Activated T-helper 2 cell treated with anti-CD3 and anti-CD28 coated beads, Interferon-gamma antibody, Interleukin-2, Interleukin-4, amounts not matched to agents 10 μg/mL and 5 μg/mL and 100 μg/mL, durations not matched to agents 14 hours and 24 hours and 36 hours (primary cell): ENCODE measurements at regions of chr9 and their contacts with region 1.

Region 1: GRCh38 chr9:19517202-19517942 is 108.6 kb downstream of the ACER2 start:
- DNase-seq: no peak
- H3K4me3 Mint-ChIP-seq: no peak overlapping the region
- H3K27ac Mint-ChIP-seq: no peak overlapping the region
- H3K4me1 Mint-ChIP-seq: peaks cover 44% of the 10 kb centered on the region
- H3K27me3 Mint-ChIP-seq: peaks cover 1% of the 10 kb centered on the region

Region 2: DNA sequence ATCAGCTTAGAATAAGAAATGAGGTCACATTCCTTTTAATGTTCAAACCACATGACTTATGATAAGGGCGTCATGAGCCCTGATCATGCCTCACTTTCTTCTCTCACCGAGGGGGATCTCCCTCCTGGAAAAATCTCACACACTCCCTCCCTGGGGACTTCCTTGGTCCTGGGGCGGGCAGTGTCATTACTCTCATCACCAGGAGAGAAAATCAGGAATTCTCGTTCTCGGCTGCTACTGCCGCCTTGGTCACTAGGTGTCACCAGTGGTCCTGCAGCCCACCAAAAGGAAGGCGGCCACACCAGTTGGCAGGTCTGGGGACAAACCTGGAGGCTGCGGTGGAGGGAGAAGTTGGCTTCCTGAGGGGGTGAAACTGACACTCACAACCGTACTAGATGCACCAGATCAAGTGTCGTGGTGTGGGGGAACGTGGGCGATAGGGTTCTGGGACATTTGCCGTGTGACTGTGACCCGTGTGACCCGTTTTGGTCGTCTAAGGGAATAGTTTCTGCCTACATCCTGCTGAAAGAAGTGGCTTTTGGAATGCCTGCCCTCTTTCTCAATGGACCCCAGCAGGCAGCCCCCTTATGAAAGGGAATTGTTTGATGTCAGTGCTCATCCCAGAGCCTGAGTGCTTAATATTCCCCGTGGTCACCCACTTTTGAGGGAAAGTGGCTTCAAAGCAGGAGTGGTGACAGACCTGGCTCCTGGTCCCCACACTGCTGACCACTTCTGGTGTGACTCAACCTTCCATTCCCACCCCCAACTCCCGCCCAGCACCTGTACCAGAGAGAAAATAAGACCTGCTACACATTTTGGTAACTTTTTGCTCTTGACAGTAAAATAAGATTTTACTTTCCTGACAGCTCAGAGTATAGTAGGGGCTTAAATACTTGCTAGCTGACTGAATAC is 45.4 kb before region 1 on chr9:
- intact Hi-C with region 1: loop called (anchors 1 kb)
- DNase-seq: no peak
- H3K4me3 Mint-ChIP-seq: peak overlapping the region; percentile 17
- H3K27ac Mint-ChIP-seq: no peak overlapping the region
- H3K4me1 Mint-ChIP-seq: peaks cover 13% of the 10 kb centered on the region
- H3K27me3 Mint-ChIP-seq: peaks cover 11% of the 10 kb centered on the region

Region 3: GRCh38 chr9:19493174-19493811 is 24.1 kb before region 1 on chr9:
- intact Hi-C with region 1: loop called (anchors 2 kb)
- DNase-seq: peak; percentile 19
- H3K4me3 Mint-ChIP-seq: no peak overlapping the region
- H3K27ac Mint-ChIP-seq: no peak overlapping the region
- H3K4me1 Mint-ChIP-seq: peaks cover 15% of the 10 kb centered on the region
- H3K27me3 Mint-ChIP-seq: peaks cover 5% of the 10 kb centered on the region

Region 4: GRCh38 chr9:19665146-19665863 is 147.9 kb after region 1 on chr9:
- intact Hi-C with region 1: loop called (anchors 5 kb)
- DNase-seq: no peak
- H3K4me3 Mint-ChIP-seq: no peak overlapping the region
- H3K27ac Mint-ChIP-seq: peak overlapping the region; percentile 43
- H3K4me1 Mint-ChIP-seq: peaks cover 12% of the 10 kb centered on the region
- H3K27me3 Mint-ChIP-seq: peaks cover 14% of the 10 kb centered on the region

Region 5: DNA sequence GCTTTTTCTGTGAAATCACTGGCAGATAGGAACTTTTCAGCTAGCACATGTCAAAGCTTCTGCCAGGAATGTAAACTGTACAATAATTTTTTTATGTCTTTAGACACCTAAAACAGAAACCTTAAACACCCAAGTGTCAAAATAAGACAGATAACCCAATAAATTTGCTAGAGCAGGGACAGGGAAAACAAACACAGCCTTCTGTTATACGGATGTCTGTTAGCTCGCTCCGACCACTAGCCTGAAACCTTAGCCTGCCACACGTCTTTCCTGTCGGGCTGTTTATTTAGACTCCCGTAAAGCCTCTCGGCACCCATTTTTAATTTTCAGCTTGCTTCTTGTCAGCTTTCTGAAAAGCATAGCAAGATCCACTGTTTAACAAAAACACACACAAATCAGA is 626.8 kb after region 1 on chr9:
- intact Hi-C with region 1: no loop called
- DNase-seq: no peak
- H3K4me3 Mint-ChIP-seq: no peak overlapping the region
- H3K27ac Mint-ChIP-seq: no peak overlapping the region
- H3K4me1 Mint-ChIP-seq: peaks cover 4% of the 10 kb centered on the region
- H3K27me3 Mint-ChIP-seq: peaks cover 2% of the 10 kb centered on the region

Region 6: GRCh38 chr9:20319641-20320337 is 802.4 kb after region 1 on chr9:
- intact Hi-C with region 1: loop called (anchors 10 kb)
- DNase-seq: no peak
- H3K4me3 Mint-ChIP-seq: no peak overlapping the region
- H3K27ac Mint-ChIP-seq: peak overlapping the region; percentile 24
- H3K4me1 Mint-ChIP-seq: peaks cover 41% of the 10 kb centered on the region
- H3K27me3 Mint-ChIP-seq: no peaks in the 10 kb centered on the region